Heart left ventricle (tissue), 16 donors: ENCODE measurements at regions of chr15 and their contacts with region 1.

Region 1: GRCh38 chr15:80942746-80943555 is 46.7 kb downstream of the MESD start:
- DNase-seq: peak in 4 of 5 donors; percentile 46 to 71 (median 62)
- ATAC-seq: peak; percentile 29 to 94 (median 81)
- H3K4me3 ChIP-seq: no peak overlapping the region
- H3K27ac ChIP-seq: no peak overlapping the region
- H3K4me1 ChIP-seq: peaks cover 0 to 8% (median 0%) of the 10 kb centered on the region in 12 donors
- H3K27me3 ChIP-seq: no peaks in the 10 kb centered on the region
- CTCF ChIP-seq: no peak
- POLR2A ChIP-seq: no peak

Region 2: DNA sequence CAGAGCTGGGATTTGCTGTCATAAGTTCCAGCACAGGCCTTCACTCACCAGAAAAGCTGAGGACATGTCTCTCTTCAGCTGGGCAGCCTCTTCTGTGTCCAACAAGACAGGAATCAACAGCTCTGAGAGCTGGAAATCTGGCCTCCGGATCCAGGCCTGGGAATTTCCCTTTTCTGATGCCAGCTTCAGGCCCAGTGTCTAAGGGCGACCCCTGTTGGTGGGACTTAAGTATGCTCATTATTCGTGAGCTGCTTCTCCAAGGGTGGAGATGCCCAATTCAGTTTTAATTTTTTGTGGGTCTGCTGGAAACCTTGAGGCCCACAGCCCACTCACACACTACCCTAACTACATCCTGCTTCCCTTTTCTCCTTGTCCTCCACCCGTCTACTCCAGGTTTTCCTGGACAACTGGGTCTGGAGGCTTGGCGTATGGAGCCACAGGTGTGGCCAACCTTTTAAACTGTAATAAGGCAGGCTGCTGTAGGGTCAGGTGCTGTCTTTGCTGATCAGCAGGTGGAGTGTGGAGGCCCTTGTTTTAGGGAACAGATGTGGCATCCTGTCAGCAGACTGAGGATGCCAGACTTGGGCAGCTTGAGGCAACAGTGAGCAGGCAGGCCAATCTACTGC is 166.4 kb before region 1 on chr15:
- intact Hi-C with region 1: no loop called
- DNase-seq: peak; percentile 64 to 77 (median 72)
- ATAC-seq: peak; percentile 38 to 66 (median 57)
- H3K4me3 ChIP-seq: no peak overlapping the region
- H3K27ac ChIP-seq: peak overlapping the region in 2 of 12 donors; percentile 40 to 58
- H3K4me1 ChIP-seq: peaks cover 2 to 49% (median 31%) of the 10 kb centered on the region in 12 donors
- H3K27me3 ChIP-seq: peaks cover 0 to 43% (median 19%) of the 10 kb centered on the region in 9 donors
- CTCF ChIP-seq: peak; percentile 74 to 89 (median 83)
- POLR2A ChIP-seq: no peak

Region 3: DNA sequence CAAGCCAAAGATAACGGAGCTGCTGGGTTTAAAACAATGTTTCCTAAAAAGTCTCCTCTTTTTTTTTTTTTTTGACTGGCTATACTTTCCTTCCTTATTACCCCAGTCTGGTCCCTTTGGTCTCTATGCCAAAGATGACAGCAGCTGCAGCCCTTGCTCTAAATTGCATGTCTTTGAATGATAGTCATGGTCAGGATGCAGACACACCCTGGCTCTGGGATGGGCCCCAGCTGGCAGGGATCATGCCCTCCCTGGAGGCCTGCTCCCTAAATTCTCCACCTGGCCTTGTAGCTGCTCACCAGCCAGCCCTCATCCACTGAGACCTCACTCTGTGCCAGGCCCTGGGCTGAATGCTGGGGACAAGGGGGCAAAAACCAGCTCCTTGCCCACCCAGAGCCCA is 49.2 kb before region 1 on chr15:
- intact Hi-C with region 1: loop called in 1 of 10 experiments (anchors 10 kb)
- DNase-seq: peak in 3 of 5 donors; percentile 39 to 68 (median 51)
- ATAC-seq: peak in 3 of 4 donors; percentile 37 to 67 (median 56)
- H3K4me3 ChIP-seq: no peak overlapping the region
- H3K27ac ChIP-seq: no peak overlapping the region
- H3K4me1 ChIP-seq: peaks cover 0 to 16% (median 0%) of the 10 kb centered on the region in 12 donors
- H3K27me3 ChIP-seq: no peaks in the 10 kb centered on the region
- CTCF ChIP-seq: no peak
- POLR2A ChIP-seq: no peak